ENCODE measurements at regions of chr1 and their contacts with region 1.

Region 1: GRCh38 chr1:160006312-160006940 is 25.4 kb downstream of the PIGM start:
- DNase-seq: peak; percentile 87

Region 2: GRCh38 chr1:159492575-159493323 is 513.7 kb before region 1 on chr1:
- CTCF ChIA-PET with region 1: no interaction called
- POLR2A ChIA-PET with region 1: no interaction called
- DNase-seq: no peak

Region 3: GRCh38 chr1:159798893-159799292 is 207.5 kb before region 1 on chr1:
- CTCF ChIA-PET with region 1: interaction called, 33 read pairs
- POLR2A ChIA-PET with region 1: no interaction called
- DNase-seq: peak; percentile 81

Region 4: DNA sequence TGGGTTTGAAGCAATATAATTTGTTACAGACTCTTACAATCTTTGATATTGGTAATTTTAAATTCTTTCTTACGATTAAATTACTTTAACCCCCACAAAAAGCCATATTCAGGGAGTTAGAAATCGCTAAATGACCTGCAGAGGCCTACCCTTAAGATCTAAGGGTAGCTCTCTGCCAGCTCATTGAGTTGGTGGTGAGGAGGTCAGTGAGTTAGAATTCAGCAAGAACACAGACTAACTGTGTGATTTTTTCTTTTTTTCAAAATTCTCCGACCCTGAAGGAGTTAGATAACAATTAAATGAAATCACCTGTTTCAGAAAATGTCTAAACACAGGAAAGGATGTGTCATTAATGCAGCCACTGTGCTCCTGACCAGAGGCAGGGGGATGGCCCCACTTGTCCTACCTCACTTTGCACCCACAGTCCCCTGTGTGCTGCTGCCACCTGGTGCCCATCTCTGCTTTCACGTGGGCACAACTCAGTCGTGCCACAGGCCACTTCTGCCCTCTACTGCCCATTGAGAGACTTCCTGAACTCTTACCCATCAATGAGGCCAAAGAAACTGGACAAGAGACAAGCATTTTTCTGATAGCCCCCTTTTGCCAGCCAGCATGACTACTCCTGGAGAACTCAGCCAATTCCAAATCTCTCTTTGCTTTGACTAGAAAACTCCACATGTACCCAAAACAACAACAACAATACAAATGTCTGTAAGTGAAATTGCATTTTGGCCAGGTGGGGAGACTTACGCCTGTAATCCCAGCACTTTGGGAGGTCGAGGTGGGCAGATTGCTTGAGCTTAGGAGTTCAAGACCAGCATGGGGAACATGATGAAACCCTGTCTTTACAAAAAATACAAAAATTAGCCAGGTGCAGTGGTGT is 114.9 kb before region 1 on chr1:
- CTCF ChIA-PET with region 1: interaction called, 12 read pairs
- POLR2A ChIA-PET with region 1: no interaction called
- DNase-seq: peak; percentile 56

Region 5: DNA sequence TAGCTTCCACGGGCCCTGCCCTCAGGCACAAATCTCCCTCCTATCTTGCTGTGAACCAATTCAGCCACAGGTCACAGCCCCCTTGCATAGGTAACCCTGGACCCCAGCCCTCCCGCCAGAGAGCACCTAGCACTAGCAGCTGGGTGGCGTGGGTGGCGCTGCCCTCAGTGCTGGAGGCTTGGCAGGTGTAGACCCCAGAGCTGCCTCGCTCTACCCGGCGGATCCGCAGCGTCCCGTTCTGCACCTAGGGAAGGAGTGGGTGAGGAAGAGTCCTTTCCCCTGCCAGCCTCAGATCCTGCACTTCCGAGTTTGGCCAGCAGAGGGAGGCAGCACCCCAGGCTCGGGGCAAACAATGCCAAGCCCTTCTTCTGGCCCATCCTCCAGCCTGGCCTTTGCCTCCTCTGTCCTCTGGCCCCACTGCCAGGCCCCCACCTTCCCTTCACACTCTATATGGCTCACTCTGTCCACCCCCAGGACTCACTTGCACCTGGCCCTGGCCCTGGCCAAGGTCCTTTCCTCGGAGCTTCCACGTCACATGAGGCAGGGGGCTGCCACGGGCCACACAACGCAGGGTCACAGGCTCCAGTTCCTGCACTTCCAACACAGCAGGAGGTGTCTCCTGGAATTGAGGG is 70.0 kb before region 1 on chr1:
- CTCF ChIA-PET with region 1: interaction called, 60 read pairs
- POLR2A ChIA-PET with region 1: interaction called, 3 read pairs
- DNase-seq: peak; percentile 89

Region 6: GRCh38 chr1:160031365-160032164 is 25.1 kb after region 1 on chr1 and contains the start of gene PIGM:
- CTCF ChIA-PET with region 1: interaction called, 10 read pairs
- POLR2A ChIA-PET with region 1: no interaction called
- DNase-seq: peak; percentile 98